GM12878 (cell line): ENCODE measurements at regions of chr2 and their contacts with region 1.

Region 1: GRCh38 chr2:155145758-155146229 is 447.3 kb downstream of the KCNJ3 start:
- DNase-seq: peak; percentile 94
- ATAC-seq: peak; percentile 96
- H3K4me3 ChIP-seq: peak overlapping the region; percentile 14; the same call in 1 of the 2 replicates
- H3K27ac ChIP-seq: peak overlapping the region; percentile 76
- H3K4me1 ChIP-seq: peaks cover 26% of the 10 kb centered on the region
- H3K27me3 ChIP-seq: no peaks in the 10 kb centered on the region
- CTCF ChIP-seq: peak in 1 of 3 experiments; percentile 16; a peak in 1 of 6 replicates
- EP300 ChIP-seq: peak; percentile 98 to 100
- POLR2A ChIP-seq: no peak
- RAD21 ChIP-seq: peak; percentile 48; the same call in 1 of the 2 replicates

Region 2: GRCh38 chr2:155190340-155190739 is 44.5 kb after region 1 on chr2:
- CTCF ChIA-PET with region 1: no interaction called
- POLR2A ChIA-PET with region 1: no interaction called
- RAD21 ChIA-PET with region 1: no interaction called
- SMC1A ChIA-PET with region 1: no interaction called
- in situ Hi-C with region 1: no loop called
- intact Hi-C with region 1: loop called (anchors 5 kb)
- DNase-seq: no peak
- ATAC-seq: peak; percentile 71
- H3K4me3 ChIP-seq: no peak overlapping the region
- H3K27ac ChIP-seq: no peak overlapping the region
- H3K4me1 ChIP-seq: no peaks in the 10 kb centered on the region
- H3K27me3 ChIP-seq: no peaks in the 10 kb centered on the region
- CTCF ChIP-seq: no peak
- EP300 ChIP-seq: no peak
- POLR2A ChIP-seq: no peak
- RAD21 ChIP-seq: no peak

Region 3: GRCh38 chr2:155215037-155215707 is 69.4 kb after region 1 on chr2:
- CTCF ChIA-PET with region 1: interaction called, 3 read pairs
- POLR2A ChIA-PET with region 1: no interaction called
- RAD21 ChIA-PET with region 1: interaction called, 6 read pairs
- SMC1A ChIA-PET with region 1: interaction called, 7 read pairs
- in situ Hi-C with region 1: no loop called
- intact Hi-C with region 1: loop called (anchors 2 kb)
- DNase-seq: no peak
- ATAC-seq: peak; percentile 80
- H3K4me3 ChIP-seq: no peak overlapping the region
- H3K27ac ChIP-seq: no peak overlapping the region
- H3K4me1 ChIP-seq: peaks cover 11% of the 10 kb centered on the region; the same call in 1 of the 2 replicates
- H3K27me3 ChIP-seq: no peaks in the 10 kb centered on the region
- CTCF ChIP-seq: no peak
- EP300 ChIP-seq: no peak; a peak in 1 of 4 replicates
- POLR2A ChIP-seq: no peak
- RAD21 ChIP-seq: no peak